CD4-positive, alpha-beta memory T cell (primary cell): ENCODE measurements at regions of chr4 and their contacts with region 1.

Region 1: DNA sequence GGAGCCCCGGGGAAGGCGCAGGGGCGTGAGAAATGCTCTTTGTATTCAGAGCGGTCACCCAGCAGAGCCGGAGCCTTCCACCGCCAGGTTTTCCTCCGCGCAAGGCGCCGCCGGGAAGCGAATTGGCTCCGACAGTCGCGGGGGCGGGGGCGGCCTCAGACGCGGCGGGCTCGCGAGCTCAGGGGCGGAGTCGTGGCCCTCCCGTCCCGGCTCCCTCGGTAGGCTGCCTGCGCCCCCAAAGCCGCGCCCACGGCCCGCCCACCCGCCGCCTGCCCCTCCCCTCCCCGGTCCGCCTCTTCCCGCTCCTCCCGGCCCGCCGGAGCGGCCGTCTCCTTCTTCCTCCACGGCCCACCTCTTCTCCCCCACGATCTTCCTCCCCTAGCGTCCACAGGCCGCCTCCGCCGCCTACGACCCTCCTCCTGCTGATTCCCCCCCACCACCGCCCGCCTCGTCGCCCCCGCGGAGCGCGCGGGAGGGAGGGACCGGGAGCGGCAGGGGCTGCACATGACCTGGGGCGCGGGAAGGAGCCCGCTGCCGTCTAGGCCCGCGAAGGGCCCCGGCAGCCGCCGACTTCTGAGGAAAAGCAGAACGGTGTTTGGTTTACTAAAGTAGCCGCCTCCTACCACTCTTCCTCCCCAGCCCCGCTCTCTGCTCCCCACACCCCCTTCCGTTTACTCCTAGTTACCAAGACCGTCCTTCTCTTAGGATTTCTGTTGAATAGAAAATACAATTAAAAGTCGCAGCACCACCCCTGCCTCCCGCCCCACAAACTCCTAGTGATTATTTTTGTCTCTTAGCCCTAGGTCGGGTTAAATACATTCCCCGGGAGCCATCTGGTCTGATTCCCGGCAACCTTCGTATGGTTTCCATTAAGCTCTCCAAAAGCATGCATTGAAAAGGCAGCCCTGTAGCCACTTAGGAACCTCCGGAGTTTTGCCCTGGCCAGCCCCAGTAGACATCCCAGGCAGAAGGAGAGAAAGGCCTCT is 53.2 kb downstream of the C4orf51 start:
- DNase-seq: peak; percentile 67 to 83 (median 69)
- H3K4me3 ChIP-seq: peak overlapping the region in 1 of 2 donors; percentile 45
- H3K4me3 Mint-ChIP-seq: peak overlapping the region; percentile 76 to 84 (median 81)
- H3K27ac ChIP-seq: peak overlapping the region; percentile 13
- H3K27ac Mint-ChIP-seq: peak overlapping the region in 5 of 7 donors; percentile 18 to 87 (median 52)
- H3K4me1 ChIP-seq: peaks cover 5% of the 10 kb centered on the region
- H3K4me1 Mint-ChIP-seq: peaks cover 4 to 31% (median 10%) of the 10 kb centered on the region in 4 donors
- H3K27me3 ChIP-seq: no peaks in the 10 kb centered on the region
- H3K27me3 Mint-ChIP-seq: peaks cover 9 to 10% of the 10 kb centered on the region in 2 donors

Region 2: GRCh38 chr4:145703850-145704528 is 29.2 kb before region 1 on chr4:
- CTCF ChIA-PET with region 1: no interaction called
- POLR2A ChIA-PET with region 1: no interaction called
- intact Hi-C with region 1: no loop called
- DNase-seq: no peak
- H3K4me3 ChIP-seq: no peak overlapping the region
- H3K4me3 Mint-ChIP-seq: peak overlapping the region in 1 of 8 donors; percentile 17
- H3K27ac ChIP-seq: no peak overlapping the region
- H3K27ac Mint-ChIP-seq: no peak overlapping the region
- H3K4me1 ChIP-seq: no peaks in the 10 kb centered on the region
- H3K4me1 Mint-ChIP-seq: no peaks in the 10 kb centered on the region
- H3K27me3 ChIP-seq: no peaks in the 10 kb centered on the region
- H3K27me3 Mint-ChIP-seq: peaks cover 4% of the 10 kb centered on the region in 2 donors

Region 3: GRCh38 chr4:146175541-146176453 is 442.6 kb after region 1 on chr4 and contains the start of gene LSM6:
- CTCF ChIA-PET with region 1: no interaction called
- POLR2A ChIA-PET with region 1: no interaction called
- intact Hi-C with region 1: loop called (anchors 10 kb)
- DNase-seq: peak; percentile 83 to 87 (median 84)
- H3K4me3 ChIP-seq: peak within 1 kb of the TSS; percentile 39 to 96
- H3K4me3 Mint-ChIP-seq: peak within 1 kb of the TSS; percentile 86 to 96 (median 92)
- H3K27ac ChIP-seq: peak within 1 kb of the TSS; percentile 81
- H3K27ac Mint-ChIP-seq: peak within 1 kb of the TSS; percentile 93 to 98 (median 97)
- H3K4me1 ChIP-seq: peaks cover 53% of the 10 kb centered on the region
- H3K4me1 Mint-ChIP-seq: peaks cover 34 to 63% (median 42%) of the 10 kb centered on the region in 4 donors
- H3K27me3 ChIP-seq: no peaks in the 10 kb centered on the region
- H3K27me3 Mint-ChIP-seq: no peaks in the 10 kb centered on the region
- total RNA-seq, gene LSM6: 47.7 to 54.0 TPM